ENCODE measurements at regions of chr16 and their contacts with region 1.

Region 1: DNA sequence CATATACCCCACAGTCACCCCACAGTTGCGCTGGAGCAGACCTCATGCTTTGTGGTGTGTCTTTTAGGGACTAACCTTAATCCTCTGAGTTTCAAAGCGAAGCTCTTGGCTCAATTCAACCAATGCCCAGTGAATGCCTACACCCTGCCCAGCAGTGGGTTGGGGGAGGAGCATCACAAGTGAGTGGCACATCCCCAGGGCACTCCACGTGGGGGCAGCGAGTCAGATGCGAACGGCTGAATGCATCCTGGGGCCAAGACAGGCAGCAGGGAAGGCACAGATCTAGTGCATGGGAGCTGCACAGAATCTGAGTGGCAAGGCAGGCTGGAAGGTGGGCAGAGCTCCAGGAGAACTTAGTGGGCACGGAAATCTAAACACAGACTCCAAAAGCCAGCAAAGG is 39.2 kb downstream of the IFT140 start:
- DNase-seq: no peak
- H3K4me3 ChIP-seq: no peak overlapping the region
- H3K27ac ChIP-seq: no peak overlapping the region
- H3K4me1 ChIP-seq: no peaks in the 10 kb centered on the region
- H3K27me3 ChIP-seq: no peaks in the 10 kb centered on the region
- CTCF ChIP-seq: no peak

Region 2: GRCh38 chr16:1258906-1259759 is 313.5 kb before region 1 on chr16:
- CTCF ChIA-PET with region 1: no interaction called
- dilution Hi-C with region 1: no loop called
- in situ Hi-C with region 1: no loop called
- intact Hi-C with region 1: no loop called
- DNase-seq: no peak
- H3K4me3 ChIP-seq: peak overlapping the region in 1 of 3 experiments; percentile 14
- H3K27ac ChIP-seq: no peak overlapping the region
- H3K4me1 ChIP-seq: peaks cover 7% of the 10 kb centered on the region
- H3K27me3 ChIP-seq: peaks cover 23% of the 10 kb centered on the region
- CTCF ChIP-seq: no peak

Region 3: GRCh38 chr16:1317479-1318267 is 255.0 kb before region 1 on chr16:
- CTCF ChIA-PET with region 1: no interaction called
- dilution Hi-C with region 1: loop called (anchors 5 kb)
- in situ Hi-C with region 1: no loop called
- intact Hi-C with region 1: no loop called
- DNase-seq: no peak
- H3K4me3 ChIP-seq: no peak overlapping the region
- H3K27ac ChIP-seq: no peak overlapping the region
- H3K4me1 ChIP-seq: peaks cover 4% of the 10 kb centered on the region
- H3K27me3 ChIP-seq: no peaks in the 10 kb centered on the region
- CTCF ChIP-seq: no peak

Region 4: GRCh38 chr16:1487395-1488053 is 85.1 kb before region 1 on chr16:
- CTCF ChIA-PET with region 1: no interaction called
- dilution Hi-C with region 1: loop called (anchors 5 kb)
- in situ Hi-C with region 1: no loop called
- intact Hi-C with region 1: no loop called
- DNase-seq: no peak
- H3K4me3 ChIP-seq: no peak overlapping the region
- H3K27ac ChIP-seq: no peak overlapping the region
- H3K4me1 ChIP-seq: peaks cover 6% of the 10 kb centered on the region
- H3K27me3 ChIP-seq: no peaks in the 10 kb centered on the region
- CTCF ChIP-seq: no peak

Region 5: GRCh38 chr16:1538804-1539572 is 33.7 kb before region 1 on chr16:
- CTCF ChIA-PET with region 1: no interaction called
- dilution Hi-C with region 1: loop called (anchors 5 kb)
- in situ Hi-C with region 1: no loop called
- intact Hi-C with region 1: no loop called
- DNase-seq: no peak
- H3K4me3 ChIP-seq: no peak overlapping the region
- H3K27ac ChIP-seq: no peak overlapping the region
- H3K4me1 ChIP-seq: peaks cover 17% of the 10 kb centered on the region
- H3K27me3 ChIP-seq: no peaks in the 10 kb centered on the region
- CTCF ChIP-seq: no peak

Region 6: GRCh38 chr16:1635070-1635469 is 62.4 kb after region 1 on chr16:
- CTCF ChIA-PET with region 1: no interaction called
- dilution Hi-C with region 1: loop called (anchors 5 kb)
- in situ Hi-C with region 1: no loop called
- intact Hi-C with region 1: no loop called
- DNase-seq: no peak
- H3K4me3 ChIP-seq: no peak overlapping the region
- H3K27ac ChIP-seq: no peak overlapping the region
- H3K4me1 ChIP-seq: no peaks in the 10 kb centered on the region
- H3K27me3 ChIP-seq: no peaks in the 10 kb centered on the region
- CTCF ChIP-seq: no peak

Measured in mammary epithelial cell (primary cell).